ENCODE measurements at regions of chr1 and their contacts with region 1.

Region 1: GRCh38 chr1:117694543-117694942 is 88.7 kb downstream of the TENT5C start:
- DNase-seq: no peak
- H3K4me3 ChIP-seq: no peak overlapping the region
- H3K4me3 Mint-ChIP-seq: no peak overlapping the region
- H3K27ac Mint-ChIP-seq: no peak overlapping the region
- H3K4me1 ChIP-seq: no peaks in the 10 kb centered on the region
- H3K4me1 Mint-ChIP-seq: no peaks in the 10 kb centered on the region
- H3K27me3 ChIP-seq: no peaks in the 10 kb centered on the region
- H3K27me3 Mint-ChIP-seq: no peaks in the 10 kb centered on the region
- CTCF ChIP-seq: no peak

Region 2: DNA sequence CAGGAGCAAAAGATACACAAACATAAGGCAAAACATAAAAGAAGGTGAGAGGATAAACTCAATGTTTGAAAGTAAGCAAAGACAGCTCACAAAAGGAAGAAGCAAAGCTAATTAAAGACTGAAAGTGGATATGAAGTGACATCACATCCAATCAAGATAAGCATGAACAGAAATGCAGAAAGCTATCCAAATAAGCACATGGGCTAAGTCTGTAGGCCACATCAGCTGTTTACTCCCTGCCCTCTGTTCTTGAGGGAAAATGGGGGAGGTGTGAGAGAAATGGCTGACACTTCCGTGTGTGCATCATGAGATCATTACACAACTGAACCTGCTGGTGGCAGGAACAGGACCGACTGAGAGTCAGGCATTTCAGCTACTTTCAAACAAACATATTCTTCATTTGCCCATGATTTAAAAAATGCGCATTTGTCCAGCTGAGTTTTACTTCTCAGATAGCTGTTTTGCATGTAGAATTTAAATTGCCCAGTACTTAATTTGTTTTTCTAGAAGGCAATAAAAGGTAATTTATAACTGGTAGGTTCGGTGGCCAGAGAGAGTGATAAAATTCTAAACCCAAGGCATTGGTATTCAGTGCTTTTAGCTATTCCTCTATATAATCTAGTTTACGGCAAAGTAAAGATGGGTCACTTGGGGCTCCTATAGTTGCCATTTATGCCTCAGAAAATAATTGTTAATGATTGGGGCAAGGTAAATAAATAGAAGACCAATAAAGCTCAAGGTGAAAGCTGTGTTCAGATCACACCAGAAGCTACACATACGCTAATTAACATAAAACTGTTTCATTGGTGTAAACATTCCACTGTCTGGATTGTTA is 354.5 kb before region 1 on chr1:
- CTCF ChIA-PET with region 1: no interaction called
- POLR2A ChIA-PET with region 1: no interaction called
- intact Hi-C with region 1: no loop called
- DNase-seq: peak; percentile 20 to 38
- H3K4me3 ChIP-seq: no peak overlapping the region
- H3K4me3 Mint-ChIP-seq: no peak overlapping the region
- H3K27ac Mint-ChIP-seq: no peak overlapping the region
- H3K4me1 ChIP-seq: 0 out of 2 replicates have a peak, but pooled peaks cover 5% of the 10 kb centered on the region
- H3K4me1 Mint-ChIP-seq: peaks cover 6% of the 10 kb centered on the region
- H3K27me3 ChIP-seq: no peaks in the 10 kb centered on the region
- H3K27me3 Mint-ChIP-seq: no peaks in the 10 kb centered on the region
- CTCF ChIP-seq: no peak

Region 3: DNA sequence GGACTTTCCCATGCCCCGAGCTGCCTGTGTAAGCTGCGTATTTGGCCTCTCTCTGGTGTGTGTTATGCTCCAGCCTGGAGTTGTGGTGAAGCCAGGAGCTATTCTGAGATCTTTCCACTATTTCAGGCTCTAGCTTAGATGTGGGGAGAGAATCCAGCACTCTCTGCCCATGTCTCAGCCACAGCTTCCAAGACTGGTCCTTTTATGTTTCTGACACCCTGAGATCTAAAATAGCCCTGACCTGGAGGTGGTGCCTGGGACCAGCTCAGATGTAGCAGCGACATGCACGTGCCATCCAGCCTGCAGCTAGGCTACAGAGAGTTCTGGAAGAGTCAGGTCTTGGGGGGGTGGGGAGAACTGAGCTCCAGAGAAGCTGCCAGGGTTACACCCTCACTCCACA is 12.2 kb before region 1 on chr1:
- CTCF ChIA-PET with region 1: no interaction called
- POLR2A ChIA-PET with region 1: interaction called, 14 read pairs
- intact Hi-C with region 1: no loop called
- DNase-seq: no peak
- H3K4me3 ChIP-seq: no peak overlapping the region
- H3K4me3 Mint-ChIP-seq: no peak overlapping the region
- H3K27ac Mint-ChIP-seq: no peak overlapping the region
- H3K4me1 ChIP-seq: no peaks in the 10 kb centered on the region
- H3K4me1 Mint-ChIP-seq: peaks cover 12% of the 10 kb centered on the region
- H3K27me3 ChIP-seq: no peaks in the 10 kb centered on the region
- H3K27me3 Mint-ChIP-seq: no peaks in the 10 kb centered on the region
- CTCF ChIP-seq: no peak

Region 4: DNA sequence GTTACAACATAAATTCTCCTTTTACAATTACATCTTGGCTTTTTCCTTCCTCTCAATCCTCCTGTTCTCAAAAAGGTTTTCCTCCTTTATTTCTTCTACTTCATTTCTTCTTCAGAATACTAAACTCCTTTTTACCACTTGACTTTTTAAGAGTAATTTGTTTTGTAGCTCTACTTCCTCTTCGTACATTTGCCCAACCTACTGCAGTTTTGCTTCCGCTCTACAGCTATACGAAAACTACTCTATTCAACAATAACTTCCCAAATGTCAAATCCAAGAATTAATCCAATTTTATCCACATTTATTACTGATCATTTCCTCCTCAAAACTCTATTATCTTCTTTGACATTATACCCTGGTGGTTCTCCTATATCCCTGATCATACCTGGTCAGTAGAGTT is 231.4 kb after region 1 on chr1:
- CTCF ChIA-PET with region 1: no interaction called
- POLR2A ChIA-PET with region 1: no interaction called
- intact Hi-C with region 1: no loop called
- DNase-seq: no peak
- H3K4me3 ChIP-seq: no peak overlapping the region
- H3K4me3 Mint-ChIP-seq: no peak overlapping the region
- H3K27ac Mint-ChIP-seq: no peak overlapping the region
- H3K4me1 ChIP-seq: no peaks in the 10 kb centered on the region
- H3K4me1 Mint-ChIP-seq: peaks cover 10% of the 10 kb centered on the region
- H3K27me3 ChIP-seq: no peaks in the 10 kb centered on the region
- H3K27me3 Mint-ChIP-seq: no peaks in the 10 kb centered on the region
- CTCF ChIP-seq: no peak